Panc1 (cell line): ENCODE measurements at regions of chr11 and their contacts with region 1.

Region 1: GRCh38 chr11:80365076-80365725 is 924.4 kb upstream of the TENM4 start:
- DNase-seq: no peak
- ATAC-seq: no peak
- H3K4me3 ChIP-seq: no peak overlapping the region
- H3K27ac ChIP-seq: no peak overlapping the region
- H3K4me1 ChIP-seq: no peaks in the 10 kb centered on the region
- H3K27me3 ChIP-seq: no peaks in the 10 kb centered on the region
- CTCF ChIP-seq: no peak

Region 2: GRCh38 chr11:78400702-78401101 is 1964.5 kb before region 1 on chr11:
- CTCF ChIA-PET with region 1: no interaction called
- POLR2A ChIA-PET with region 1: interaction called, 10 read pairs
- in situ Hi-C with region 1: no loop called
- intact Hi-C with region 1: no loop called
- DNase-seq: no peak
- ATAC-seq: no peak
- H3K4me3 ChIP-seq: no peak overlapping the region
- H3K27ac ChIP-seq: no peak overlapping the region
- H3K4me1 ChIP-seq: no peaks in the 10 kb centered on the region
- H3K27me3 ChIP-seq: no peaks in the 10 kb centered on the region
- CTCF ChIP-seq: no peak